Mammary epithelial cell (primary cell): ENCODE measurements at regions of chr10 and their contacts with region 1.

Region 1: GRCh38 chr10:32207544-32207943 is 139.4 kb downstream of the EPC1 start:
- DNase-seq: peak; percentile 39
- H3K4me3 ChIP-seq: no peak overlapping the region
- H3K27ac ChIP-seq: no peak overlapping the region
- H3K4me1 ChIP-seq: no peaks in the 10 kb centered on the region
- H3K27me3 ChIP-seq: no peaks in the 10 kb centered on the region
- CTCF ChIP-seq: peak; percentile 64 to 85

Region 2: GRCh38 chr10:31864834-31865518 is 342.6 kb before region 1 on chr10:
- CTCF ChIA-PET with region 1: no interaction called
- dilution Hi-C with region 1: no loop called
- in situ Hi-C with region 1: loop called in 1 of 2 experiments (anchors 25 kb)
- intact Hi-C with region 1: loop called (anchors 2 kb)
- DNase-seq: no peak
- H3K4me3 ChIP-seq: no peak overlapping the region
- H3K27ac ChIP-seq: no peak overlapping the region
- H3K4me1 ChIP-seq: peaks cover 6% of the 10 kb centered on the region
- H3K27me3 ChIP-seq: no peaks in the 10 kb centered on the region
- CTCF ChIP-seq: no peak

Region 3: GRCh38 chr10:32041290-32042028 is 166.1 kb before region 1 on chr10:
- CTCF ChIA-PET with region 1: no interaction called
- dilution Hi-C with region 1: no loop called
- in situ Hi-C with region 1: no loop called
- intact Hi-C with region 1: loop called (anchors 2 kb)
- DNase-seq: no peak
- H3K4me3 ChIP-seq: no peak overlapping the region
- H3K27ac ChIP-seq: no peak overlapping the region
- H3K4me1 ChIP-seq: no peaks in the 10 kb centered on the region
- H3K27me3 ChIP-seq: no peaks in the 10 kb centered on the region
- CTCF ChIP-seq: no peak

Region 4: GRCh38 chr10:32139223-32140073 is 68.1 kb before region 1 on chr10:
- CTCF ChIA-PET with region 1: no interaction called
- dilution Hi-C with region 1: no loop called
- in situ Hi-C with region 1: no loop called
- intact Hi-C with region 1: loop called (anchors 1 kb)
- DNase-seq: peak; percentile 94
- H3K4me3 ChIP-seq: no peak overlapping the region
- H3K27ac ChIP-seq: peak overlapping the region; percentile 89
- H3K4me1 ChIP-seq: peaks cover 32% of the 10 kb centered on the region
- H3K27me3 ChIP-seq: no peaks in the 10 kb centered on the region
- CTCF ChIP-seq: peak; percentile 24 to 48

Region 5: GRCh38 chr10:32155042-32155531 is 52.5 kb before region 1 on chr10:
- CTCF ChIA-PET with region 1: no interaction called
- dilution Hi-C with region 1: no loop called
- in situ Hi-C with region 1: no loop called
- intact Hi-C with region 1: no loop called
- DNase-seq: peak; percentile 76
- H3K4me3 ChIP-seq: no peak overlapping the region
- H3K27ac ChIP-seq: peak overlapping the region; percentile 85
- H3K4me1 ChIP-seq: peaks cover 20% of the 10 kb centered on the region
- H3K27me3 ChIP-seq: no peaks in the 10 kb centered on the region
- CTCF ChIP-seq: peak; percentile 5 to 14

Region 6: GRCh38 chr10:32279795-32280194 is 72.3 kb after region 1 on chr10:
- CTCF ChIA-PET with region 1: no interaction called
- dilution Hi-C with region 1: no loop called
- in situ Hi-C with region 1: no loop called
- intact Hi-C with region 1: no loop called
- DNase-seq: no peak
- H3K4me3 ChIP-seq: no peak overlapping the region
- H3K27ac ChIP-seq: no peak overlapping the region
- H3K4me1 ChIP-seq: no peaks in the 10 kb centered on the region
- H3K27me3 ChIP-seq: no peaks in the 10 kb centered on the region
- CTCF ChIP-seq: no peak